Ovary (tissue), 10 donors: ENCODE measurements at regions of chr2 and their contacts with region 1.

Region 1: DNA sequence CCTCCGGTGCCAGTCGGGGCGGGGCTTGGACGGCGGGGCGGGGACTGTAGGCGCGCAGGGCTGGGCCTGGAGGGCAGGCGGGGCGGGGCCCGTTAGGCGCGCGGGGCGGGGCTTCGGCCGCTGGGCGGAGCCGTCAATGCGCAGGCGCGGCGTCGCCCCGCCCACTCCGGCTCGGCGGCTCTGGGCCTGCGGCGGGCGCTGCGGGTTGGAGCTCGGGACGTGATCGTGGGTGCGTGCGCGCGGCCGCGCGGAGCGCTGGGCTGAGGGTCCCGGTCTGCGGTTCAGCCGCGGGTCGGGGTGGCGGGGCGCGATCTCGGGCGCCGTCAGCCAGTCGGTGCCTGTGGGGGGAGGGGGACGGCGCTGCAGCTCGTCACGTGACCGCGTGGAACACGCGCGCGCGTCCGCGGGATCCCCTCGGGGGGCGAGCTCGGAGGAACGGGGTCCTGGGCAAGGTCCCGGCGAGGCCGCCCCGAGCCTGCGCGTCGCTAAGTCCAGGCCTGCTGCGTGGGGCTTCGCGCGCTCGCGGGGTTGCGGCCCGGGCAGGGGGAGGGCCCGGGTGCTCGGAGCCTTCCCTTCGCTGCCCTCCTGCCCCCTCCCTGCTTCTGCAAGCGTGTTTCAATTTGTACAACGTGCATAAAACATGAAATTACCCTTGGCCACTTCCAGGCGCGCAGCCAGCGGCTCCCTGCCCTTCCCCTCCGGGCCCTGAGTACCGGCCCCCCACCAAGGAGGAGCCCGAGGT is at the start of gene D2HGDH:
- DNase-seq: peak; percentile 94 to 97 (median 96)
- H3K4me3 ChIP-seq: peak within 1 kb of the TSS; percentile 68
- H3K27ac ChIP-seq: peak within 1 kb of the TSS; percentile 16 to 77
- H3K4me1 ChIP-seq: peaks cover 6% of the 10 kb centered on the region
- H3K27me3 ChIP-seq: no peaks in the 10 kb centered on the region
- CTCF ChIP-seq: no peak
- EP300 ChIP-seq: no peak
- POLR2A ChIP-seq: peak; percentile 67
- total RNA-seq, gene D2HGDH: 17.1 to 35.1 (median 26.3) TPM

Region 2: GRCh38 chr2:241701399-241702131 is 33.1 kb before region 1 on chr2 and contains the start of gene ING5:
- intact Hi-C with region 1: loop called in 1 of 4 experiments (anchors 2 kb)
- DNase-seq: peak; percentile 96 to 99 (median 98)
- H3K4me3 ChIP-seq: peak within 1 kb of the TSS; percentile 77
- H3K27ac ChIP-seq: peak within 1 kb of the TSS; percentile 84 to 97
- H3K4me1 ChIP-seq: peaks cover 5% of the 10 kb centered on the region
- H3K27me3 ChIP-seq: no peaks in the 10 kb centered on the region
- CTCF ChIP-seq: no peak
- EP300 ChIP-seq: no peak
- POLR2A ChIP-seq: peak; percentile 86
- total RNA-seq, gene ING5: 24.9 to 57.1 (median 39.9) TPM